ENCODE measurements at regions of chr4 and their contacts with region 1.

Region 1: DNA sequence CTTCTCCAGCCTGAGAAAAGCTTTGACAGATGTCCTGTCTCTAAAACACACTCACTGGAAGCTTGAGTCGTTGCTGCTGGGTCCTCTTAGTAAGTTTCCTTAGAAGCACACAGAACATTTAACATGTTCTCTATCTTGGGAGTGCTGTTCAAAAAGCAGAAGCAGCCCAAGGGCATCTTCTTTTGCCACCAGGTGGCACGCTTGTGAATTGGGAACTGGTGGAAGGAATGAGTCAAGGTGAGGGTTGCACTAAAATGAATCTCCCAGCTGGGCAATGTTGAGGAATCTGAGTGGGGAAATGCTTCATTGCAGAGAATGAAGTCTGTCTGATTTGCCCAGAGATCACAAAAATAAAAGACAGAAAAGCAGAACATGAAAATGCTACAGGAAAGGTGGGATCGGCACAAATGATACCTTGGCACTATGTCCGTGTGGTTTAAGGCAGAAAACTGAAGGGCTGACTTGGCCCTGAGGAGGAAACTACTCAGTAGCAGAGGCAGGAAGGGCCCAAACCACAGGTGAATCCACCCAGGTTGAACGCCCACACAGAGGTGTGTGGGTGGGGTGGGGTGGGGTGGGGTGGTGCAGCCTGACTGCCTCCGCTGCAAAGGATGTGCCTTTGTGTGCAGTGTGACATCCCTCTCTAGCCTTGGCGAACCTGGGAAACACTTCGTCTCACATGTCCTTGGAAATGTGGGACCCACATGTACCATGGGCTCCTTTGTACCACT is 26.0 kb downstream of the KIT start:
- DNase-seq: no peak
- ATAC-seq: peak in 1 of 8 donors; percentile 55
- H3K4me3 ChIP-seq: no peak overlapping the region
- H3K27ac ChIP-seq: no peak overlapping the region
- H3K4me1 ChIP-seq: peaks cover 0 to 12% (median 0%) of the 10 kb centered on the region in 9 donors
- H3K27me3 ChIP-seq: no peaks in the 10 kb centered on the region
- CTCF ChIP-seq: peak in 7 of 9 donors; percentile 27 to 49 (median 38)

Region 2: DNA sequence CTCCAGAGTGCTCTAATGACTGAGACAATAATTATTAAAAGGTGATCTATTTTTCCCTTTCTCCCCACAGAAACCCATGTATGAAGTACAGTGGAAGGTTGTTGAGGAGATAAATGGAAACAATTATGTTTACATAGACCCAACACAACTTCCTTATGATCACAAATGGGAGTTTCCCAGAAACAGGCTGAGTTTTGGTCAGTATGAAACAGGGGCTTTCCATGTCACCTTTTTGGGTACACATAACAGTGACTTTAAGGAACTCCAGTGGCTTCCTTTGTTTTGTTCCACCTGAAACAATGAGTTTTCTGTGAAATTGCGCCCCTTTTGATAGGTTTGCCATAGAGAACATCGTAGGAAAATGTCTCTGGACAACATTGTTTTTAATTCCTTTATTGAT is 43.6 kb after region 1 on chr4:
- intact Hi-C with region 1: no loop called
- DNase-seq: no peak
- ATAC-seq: no peak
- H3K4me3 ChIP-seq: no peak overlapping the region
- H3K27ac ChIP-seq: no peak overlapping the region
- H3K4me1 ChIP-seq: peaks cover 0 to 10% (median 0%) of the 10 kb centered on the region in 9 donors
- H3K27me3 ChIP-seq: no peaks in the 10 kb centered on the region
- CTCF ChIP-seq: no peak

Region 3: DNA sequence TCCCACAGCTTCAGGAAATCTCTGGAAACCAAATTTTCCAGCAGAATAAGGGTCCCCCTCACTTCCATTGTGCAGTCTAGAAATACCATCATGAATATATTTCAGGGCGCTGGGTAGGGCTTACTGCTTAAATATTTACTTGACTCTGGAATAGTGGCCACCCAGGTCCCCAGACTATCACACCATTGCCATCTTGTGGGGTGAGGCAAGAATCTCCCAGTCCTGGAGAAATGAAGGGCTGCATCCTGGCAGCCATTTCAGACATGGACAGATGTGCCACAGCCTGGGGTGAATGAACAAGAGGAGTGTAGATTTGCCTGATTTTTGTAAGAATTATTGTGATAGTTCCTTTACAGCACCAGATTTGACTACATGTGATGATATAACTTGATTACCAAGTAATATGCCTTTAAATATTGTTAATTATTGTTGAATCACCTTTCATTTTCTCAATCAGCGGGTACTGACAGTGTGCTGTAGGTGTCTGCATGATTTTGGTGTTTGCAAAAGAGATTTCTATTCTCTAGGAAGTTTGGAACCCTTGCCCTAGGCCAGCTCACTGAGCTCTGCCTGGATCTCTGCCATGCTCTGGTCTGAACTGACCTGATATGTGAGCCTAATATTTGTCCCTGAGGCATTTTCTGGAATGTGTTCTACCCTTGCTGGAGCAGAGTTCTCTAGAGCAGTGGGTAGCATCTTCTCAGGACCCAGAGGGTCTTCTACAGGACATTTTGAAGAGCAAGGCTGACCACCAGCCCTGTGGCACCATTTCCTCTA is 157.4 kb after region 1 on chr4:
- intact Hi-C with region 1: loop called in 1 of 10 experiments (anchors 10 kb)
- DNase-seq: peak in 1 of 2 donors; percentile 26
- ATAC-seq: peak in 7 of 8 donors; percentile 54 to 88 (median 78)
- H3K4me3 ChIP-seq: no peak overlapping the region
- H3K27ac ChIP-seq: no peak overlapping the region
- H3K4me1 ChIP-seq: peaks cover 0 to 21% (median 7%) of the 10 kb centered on the region in 9 donors
- H3K27me3 ChIP-seq: no peaks in the 10 kb centered on the region
- CTCF ChIP-seq: peak; percentile 10 to 55 (median 46)

Region 4: GRCh38 chr4:54941994-54942552 is 258.3 kb after region 1 on chr4:
- intact Hi-C with region 1: loop called in 1 of 10 experiments (anchors 10 kb)
- DNase-seq: peak; percentile 19 to 36
- ATAC-seq: peak in 7 of 8 donors; percentile 67 to 93 (median 89)
- H3K4me3 ChIP-seq: peak overlapping the region in 1 of 10 donors; percentile 13
- H3K27ac ChIP-seq: peak overlapping the region in 8 of 10 donors; percentile 15 to 65 (median 31)
- H3K4me1 ChIP-seq: peaks cover 0 to 33% (median 10%) of the 10 kb centered on the region in 9 donors
- H3K27me3 ChIP-seq: no peaks in the 10 kb centered on the region
- CTCF ChIP-seq: no peak

Region 5: DNA sequence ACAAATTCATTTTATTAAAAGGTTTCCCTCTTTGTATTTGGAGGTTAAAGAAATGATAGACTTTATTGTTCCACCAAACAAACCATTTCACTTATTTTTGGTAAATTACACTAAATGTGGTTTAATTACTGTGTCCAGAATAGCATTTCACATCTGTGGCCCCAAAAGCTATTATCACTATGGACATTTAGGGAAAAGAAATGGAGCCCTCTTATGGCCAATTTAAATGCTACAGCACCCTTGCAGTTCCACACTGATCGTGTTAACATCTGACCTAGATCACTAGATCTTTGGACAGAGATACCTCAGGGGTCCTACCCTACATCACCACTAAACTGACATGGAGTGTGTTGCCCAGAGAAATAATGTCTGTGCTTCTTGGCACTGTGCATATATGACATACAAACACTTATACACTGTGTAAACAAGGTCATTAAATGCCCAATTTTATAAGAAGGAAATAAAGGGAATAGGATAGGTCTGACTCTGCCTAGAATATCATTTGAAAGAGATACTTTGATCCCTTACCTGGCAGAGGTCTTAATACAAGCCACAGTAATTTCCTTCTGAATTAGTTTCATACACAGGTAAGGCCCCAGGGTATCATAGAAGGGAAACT is 277.7 kb after region 1 on chr4:
- intact Hi-C with region 1: loop called in 1 of 10 experiments (anchors 10 kb)
- DNase-seq: no peak
- ATAC-seq: peak in 5 of 8 donors; percentile 31 to 79 (median 64)
- H3K4me3 ChIP-seq: no peak overlapping the region
- H3K27ac ChIP-seq: no peak overlapping the region
- H3K4me1 ChIP-seq: no peaks in the 10 kb centered on the region
- H3K27me3 ChIP-seq: no peaks in the 10 kb centered on the region
- CTCF ChIP-seq: peak; percentile 35 to 72 (median 67)

Measured in heart right ventricle (tissue), 16 donors.